Activated CD4-positive, alpha-beta T cell treated with anti-CD3 and anti-CD28 coated beads, Interleukin-2, amount 10 ng/mL, durations not matched to agents 24 days and 14 days (primary cell): ENCODE measurements at regions of chr7 and their contacts with region 1.

Region 1: GRCh38 chr7:1919539-1920265 is 249.6 kb downstream of the ELFN1 start:
- DNase-seq: no peak
- H3K4me3 Mint-ChIP-seq: peak overlapping the region; percentile 82
- H3K27ac Mint-ChIP-seq: no peak overlapping the region
- H3K4me1 Mint-ChIP-seq: peaks cover 42% of the 10 kb centered on the region
- H3K27me3 Mint-ChIP-seq: peaks cover 22% of the 10 kb centered on the region

Region 2: GRCh38 chr7:1951159-1951536 is 31.4 kb after region 1 on chr7:
- intact Hi-C with region 1: no loop called
- DNase-seq: peak; percentile 78
- H3K4me3 Mint-ChIP-seq: no peak overlapping the region
- H3K27ac Mint-ChIP-seq: no peak overlapping the region
- H3K4me1 Mint-ChIP-seq: peaks cover 8% of the 10 kb centered on the region
- H3K27me3 Mint-ChIP-seq: no peaks in the 10 kb centered on the region

Region 3: GRCh38 chr7:1961701-1962276 is 42.1 kb after region 1 on chr7:
- intact Hi-C with region 1: loop called (anchors 1 kb)
- DNase-seq: peak; percentile 79
- H3K4me3 Mint-ChIP-seq: peak overlapping the region; percentile 21
- H3K27ac Mint-ChIP-seq: peak overlapping the region; percentile 84
- H3K4me1 Mint-ChIP-seq: peaks cover 9% of the 10 kb centered on the region
- H3K27me3 Mint-ChIP-seq: peaks cover 6% of the 10 kb centered on the region

Region 4: DNA sequence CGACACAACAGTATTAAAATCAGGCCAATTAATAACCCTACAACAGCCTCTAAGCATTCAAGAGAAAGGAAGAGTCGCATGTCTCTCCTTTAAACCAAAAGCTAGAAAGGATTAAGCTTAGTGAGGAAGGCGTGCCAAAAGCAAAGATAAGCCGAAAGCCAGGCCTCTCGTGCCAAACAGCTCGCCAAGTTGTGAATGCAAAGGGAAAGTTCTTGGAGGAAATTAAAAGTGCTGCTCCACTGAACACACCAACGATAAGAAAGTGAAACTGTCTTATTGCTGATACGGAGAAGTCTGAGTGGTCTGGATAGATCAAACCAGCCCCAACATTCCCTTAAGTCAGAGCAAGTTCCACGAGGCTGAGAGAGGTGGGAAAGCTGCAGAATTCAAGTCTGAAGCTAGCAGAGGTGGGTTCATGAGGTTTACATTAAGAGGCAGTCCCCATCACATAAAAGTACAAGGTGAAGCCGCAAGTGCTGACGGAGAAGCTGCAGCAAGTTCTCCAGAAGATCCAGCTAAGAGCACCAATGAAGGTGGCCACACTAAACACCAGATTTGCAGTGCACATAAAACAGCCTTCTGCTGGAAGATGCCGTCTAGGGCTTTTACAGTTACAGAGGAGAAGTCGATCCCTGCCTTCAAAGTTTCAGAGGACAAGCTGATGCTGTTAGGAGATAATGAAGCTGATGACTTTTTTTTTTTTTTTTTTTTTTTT is 118.3 kb after region 1 on chr7:
- intact Hi-C with region 1: loop called (anchors 5 kb)
- DNase-seq: peak; percentile 79
- H3K4me3 Mint-ChIP-seq: peak overlapping the region; percentile 86
- H3K27ac Mint-ChIP-seq: peak overlapping the region; percentile 73
- H3K4me1 Mint-ChIP-seq: peaks cover 44% of the 10 kb centered on the region
- H3K27me3 Mint-ChIP-seq: peaks cover 3% of the 10 kb centered on the region

Region 5: GRCh38 chr7:2172311-2173188 is 252.8 kb after region 1 on chr7:
- intact Hi-C with region 1: no loop called
- DNase-seq: no peak
- H3K4me3 Mint-ChIP-seq: no peak overlapping the region
- H3K27ac Mint-ChIP-seq: no peak overlapping the region
- H3K4me1 Mint-ChIP-seq: peaks cover 5% of the 10 kb centered on the region
- H3K27me3 Mint-ChIP-seq: no peaks in the 10 kb centered on the region